CD8-positive, alpha-beta T cell (primary cell): ENCODE measurements at regions of chr9 and their contacts with region 1.

Region 1: DNA sequence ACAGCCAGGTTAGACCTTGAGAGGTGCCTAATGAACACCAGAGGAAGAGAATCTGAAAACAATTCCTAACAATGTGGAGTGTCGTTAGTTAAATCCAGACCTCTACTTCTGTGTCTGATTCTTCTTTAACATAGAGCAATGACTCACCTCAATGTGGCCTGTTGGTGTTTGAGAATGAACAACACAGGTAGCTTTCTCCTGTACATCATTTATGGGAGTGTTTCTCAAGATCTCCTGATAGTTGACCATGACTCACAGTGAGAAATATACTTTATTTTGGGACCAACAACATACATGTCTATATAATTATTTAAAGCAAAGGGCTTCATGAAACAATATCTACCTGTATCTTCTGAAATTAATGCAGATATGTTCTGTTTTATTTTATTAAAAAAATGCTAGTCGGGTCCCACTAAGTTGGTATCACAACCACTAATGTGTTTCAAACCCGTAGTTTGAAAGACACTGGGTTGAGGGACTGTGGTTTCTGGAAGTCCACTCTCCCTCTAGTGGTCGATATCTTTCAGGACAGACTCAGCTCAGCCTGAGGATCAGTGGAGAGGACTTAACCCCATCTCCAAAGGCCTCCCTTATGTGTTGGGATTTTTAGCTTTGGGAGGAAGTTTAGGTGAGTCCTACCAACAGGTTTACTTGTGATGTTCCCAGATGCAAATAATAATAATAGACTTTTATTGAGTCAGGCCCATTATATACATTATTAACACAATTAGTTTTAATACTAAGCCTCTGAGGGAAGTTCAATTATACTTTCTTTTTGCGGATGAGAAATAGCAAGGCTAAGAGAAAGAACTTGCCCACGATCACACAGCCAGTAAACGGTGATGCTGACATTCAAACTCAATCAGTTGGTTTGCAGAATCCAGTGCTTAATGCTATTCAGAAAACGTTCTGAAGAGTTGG is 70.0 kb upstream of the KLF9 start:
- DNase-seq: peak in 2 of 9 experiments; percentile 58 to 67
- ATAC-seq: peak; percentile 67
- H3K4me3 ChIP-seq: no peak overlapping the region
- H3K4me3 Mint-ChIP-seq: no peak overlapping the region
- H3K27ac ChIP-seq: no peak overlapping the region
- H3K27ac Mint-ChIP-seq: no peak overlapping the region
- H3K4me1 ChIP-seq: no peaks in the 10 kb centered on the region
- H3K4me1 Mint-ChIP-seq: peaks cover 12% of the 10 kb centered on the region
- H3K27me3 ChIP-seq: no peaks in the 10 kb centered on the region
- H3K27me3 Mint-ChIP-seq: no peaks in the 10 kb centered on the region
- CTCF ChIP-seq: peak; percentile 52

Region 2: DNA sequence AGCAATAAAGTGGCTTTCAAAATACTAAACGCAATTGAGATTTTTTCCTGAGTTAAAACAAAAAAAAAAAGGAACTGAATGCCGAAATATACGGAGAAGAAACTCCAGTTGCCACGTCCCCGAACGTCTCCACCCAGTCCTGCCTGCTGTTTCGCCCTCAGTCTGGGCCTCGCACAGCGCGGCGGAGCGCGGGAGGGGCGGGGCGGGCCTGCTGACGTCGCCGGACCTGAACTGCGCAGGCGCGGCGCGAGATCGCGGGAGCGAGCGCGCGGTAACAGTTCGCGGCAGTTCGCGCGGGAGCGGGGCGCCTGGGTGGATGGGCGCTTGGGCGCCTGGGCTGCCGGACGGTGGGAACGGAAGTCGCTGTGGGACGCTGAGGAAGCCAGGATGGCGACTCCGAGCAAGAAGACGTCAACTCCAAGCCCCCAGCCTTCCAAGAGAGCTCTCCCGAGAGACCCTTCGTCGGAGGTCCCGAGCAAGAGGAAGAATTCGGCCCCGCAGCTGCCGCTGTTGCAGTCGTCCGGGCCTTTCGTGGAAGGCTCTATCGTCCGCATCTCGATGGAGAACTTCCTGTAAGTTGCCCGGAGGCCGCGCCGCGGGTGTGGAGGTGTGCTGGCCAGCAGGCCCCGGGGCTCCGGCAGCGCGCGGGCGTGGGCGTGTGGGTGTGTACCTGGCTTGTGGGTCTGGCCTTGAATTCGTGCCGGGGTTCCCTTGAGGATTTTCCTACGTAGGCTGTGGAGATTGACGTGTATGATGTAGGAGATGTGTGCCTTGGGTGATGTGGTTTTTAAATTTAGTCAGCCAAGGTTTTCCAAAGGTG is 225.6 kb before region 1 on chr9 and contains the start of gene SMC5:
- CTCF ChIA-PET with region 1: no interaction called
- POLR2A ChIA-PET with region 1: no interaction called
- intact Hi-C with region 1: loop called in 1 of 2 experiments (anchors 10 kb)
- DNase-seq: peak; percentile 76 to 95 (median 87)
- ATAC-seq: peak; percentile 87
- H3K4me3 ChIP-seq: peak within 1 kb of the TSS; percentile 89 to 97
- H3K4me3 Mint-ChIP-seq: peak within 1 kb of the TSS; percentile 95
- H3K27ac ChIP-seq: peak within 1 kb of the TSS; percentile 85 to 94
- H3K27ac Mint-ChIP-seq: peak within 1 kb of the TSS; percentile 96
- H3K4me1 ChIP-seq: peaks cover 54% of the 10 kb centered on the region
- H3K4me1 Mint-ChIP-seq: peaks cover 66% of the 10 kb centered on the region
- H3K27me3 ChIP-seq: no peaks in the 10 kb centered on the region
- H3K27me3 Mint-ChIP-seq: no peaks in the 10 kb centered on the region
- CTCF ChIP-seq: no peak
- total RNA-seq, gene SMC5: 28.6 to 32.0 TPM

Region 3: GRCh38 chr9:70352802-70353201 is 131.7 kb before region 1 on chr9:
- CTCF ChIA-PET with region 1: interaction called, 8 read pairs
- POLR2A ChIA-PET with region 1: interaction called, 3 read pairs
- intact Hi-C with region 1: loop called (anchors 1 kb)
- DNase-seq: peak in 2 of 9 experiments; percentile 34 to 53
- ATAC-seq: peak; percentile 36
- H3K4me3 ChIP-seq: no peak overlapping the region
- H3K4me3 Mint-ChIP-seq: no peak overlapping the region
- H3K27ac ChIP-seq: no peak overlapping the region
- H3K27ac Mint-ChIP-seq: no peak overlapping the region
- H3K4me1 ChIP-seq: no peaks in the 10 kb centered on the region
- H3K4me1 Mint-ChIP-seq: peaks cover 2% of the 10 kb centered on the region
- H3K27me3 ChIP-seq: no peaks in the 10 kb centered on the region
- H3K27me3 Mint-ChIP-seq: no peaks in the 10 kb centered on the region
- CTCF ChIP-seq: peak; percentile 75

Region 4: DNA sequence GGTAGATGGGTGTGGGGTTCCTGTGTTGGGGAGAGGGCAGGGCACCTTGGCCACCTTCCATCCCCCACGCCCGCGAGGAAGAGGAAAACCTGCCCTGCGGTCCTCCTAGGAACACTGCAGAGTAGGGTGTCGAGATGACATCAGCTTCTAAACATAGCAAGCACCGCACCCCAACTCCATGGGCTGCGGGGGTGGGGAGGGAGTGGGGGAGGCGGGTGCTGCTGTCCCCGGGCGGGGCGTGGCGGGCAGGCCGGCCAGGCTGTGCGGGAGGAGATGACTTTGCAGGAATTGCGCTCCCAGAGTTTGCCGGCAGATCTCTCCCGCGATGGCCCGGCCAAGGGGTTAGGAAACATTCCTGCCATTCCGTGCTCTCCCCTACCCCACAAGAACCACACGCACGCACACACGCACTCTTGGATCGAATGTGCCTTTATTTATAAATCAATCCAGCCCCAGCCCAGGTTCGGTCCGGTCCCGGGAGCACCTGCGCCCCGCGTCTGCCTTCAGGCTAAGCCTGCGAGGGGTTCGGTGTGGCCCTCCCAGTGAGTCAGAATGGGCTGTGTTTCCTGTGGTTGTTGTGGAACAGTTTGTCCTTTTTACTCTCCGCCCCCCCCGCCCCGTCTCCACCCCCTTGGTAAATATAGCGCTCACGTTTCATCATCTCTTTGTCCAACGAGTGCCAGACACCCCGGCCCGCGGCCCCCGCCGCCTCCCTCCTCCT is 64.8 kb before region 1 on chr9:
- CTCF ChIA-PET with region 1: interaction called, 9 read pairs
- POLR2A ChIA-PET with region 1: interaction called, 4 read pairs
- intact Hi-C with region 1: loop called (anchors 1 to 10 kb)
- DNase-seq: peak; percentile 77 to 94 (median 86)
- ATAC-seq: peak; percentile 56
- H3K4me3 ChIP-seq: peak overlapping the region; percentile 73 to 79
- H3K4me3 Mint-ChIP-seq: peak overlapping the region; percentile 95
- H3K27ac ChIP-seq: peak overlapping the region; percentile 95 to 97
- H3K27ac Mint-ChIP-seq: peak overlapping the region; percentile 100
- H3K4me1 ChIP-seq: peaks cover 42% of the 10 kb centered on the region
- H3K4me1 Mint-ChIP-seq: peaks cover 51% of the 10 kb centered on the region
- H3K27me3 ChIP-seq: no peaks in the 10 kb centered on the region
- H3K27me3 Mint-ChIP-seq: no peaks in the 10 kb centered on the region
- CTCF ChIP-seq: no peak

Region 5: GRCh38 chr9:70463877-70464276 is 20.6 kb before region 1 on chr9:
- CTCF ChIA-PET with region 1: interaction called, 4 read pairs
- POLR2A ChIA-PET with region 1: no interaction called
- intact Hi-C with region 1: loop called in 1 of 2 experiments (anchors 1 kb)
- DNase-seq: no peak
- ATAC-seq: no peak
- H3K4me3 ChIP-seq: no peak overlapping the region
- H3K4me3 Mint-ChIP-seq: no peak overlapping the region
- H3K27ac ChIP-seq: no peak overlapping the region
- H3K27ac Mint-ChIP-seq: no peak overlapping the region
- H3K4me1 ChIP-seq: no peaks in the 10 kb centered on the region
- H3K4me1 Mint-ChIP-seq: peaks cover 5% of the 10 kb centered on the region
- H3K27me3 ChIP-seq: no peaks in the 10 kb centered on the region
- H3K27me3 Mint-ChIP-seq: no peaks in the 10 kb centered on the region
- CTCF ChIP-seq: no peak

Region 6: GRCh38 chr9:70519912-70520724 is 35.6 kb after region 1 on chr9:
- CTCF ChIA-PET with region 1: no interaction called
- POLR2A ChIA-PET with region 1: no interaction called
- intact Hi-C with region 1: no loop called
- DNase-seq: no peak
- ATAC-seq: no peak
- H3K4me3 ChIP-seq: no peak overlapping the region
- H3K4me3 Mint-ChIP-seq: no peak overlapping the region
- H3K27ac ChIP-seq: no peak overlapping the region
- H3K27ac Mint-ChIP-seq: no peak overlapping the region
- H3K4me1 ChIP-seq: no peaks in the 10 kb centered on the region
- H3K4me1 Mint-ChIP-seq: peaks cover 4% of the 10 kb centered on the region
- H3K27me3 ChIP-seq: no peaks in the 10 kb centered on the region
- H3K27me3 Mint-ChIP-seq: no peaks in the 10 kb centered on the region
- CTCF ChIP-seq: no peak

Region 7: DNA sequence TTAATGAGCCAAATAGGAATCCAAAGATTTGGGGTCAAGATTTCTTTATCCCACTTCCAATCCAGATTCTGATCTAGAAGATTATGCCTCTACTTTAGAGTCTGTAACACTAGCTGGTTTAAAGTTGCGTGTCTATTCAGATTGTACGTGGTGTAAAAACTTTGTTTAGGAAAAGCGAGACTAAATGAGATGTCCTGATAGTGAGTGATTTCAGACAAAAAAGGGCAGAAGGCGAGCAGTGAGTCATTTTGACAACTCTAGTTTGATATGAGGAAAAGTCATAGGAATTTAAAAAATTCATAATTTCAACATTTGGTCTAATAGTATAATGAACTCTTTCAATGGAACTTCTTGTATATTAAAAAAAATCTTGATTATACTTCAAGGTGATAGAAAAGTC is 49.6 kb after region 1 on chr9:
- CTCF ChIA-PET with region 1: interaction called, 3 read pairs
- POLR2A ChIA-PET with region 1: no interaction called
- intact Hi-C with region 1: loop called in 1 of 2 experiments (anchors 10 kb)
- DNase-seq: no peak
- ATAC-seq: no peak
- H3K4me3 ChIP-seq: no peak overlapping the region
- H3K4me3 Mint-ChIP-seq: no peak overlapping the region
- H3K27ac ChIP-seq: no peak overlapping the region
- H3K27ac Mint-ChIP-seq: no peak overlapping the region
- H3K4me1 ChIP-seq: peaks cover 10% of the 10 kb centered on the region
- H3K4me1 Mint-ChIP-seq: peaks cover 20% of the 10 kb centered on the region
- H3K27me3 ChIP-seq: no peaks in the 10 kb centered on the region
- H3K27me3 Mint-ChIP-seq: no peaks in the 10 kb centered on the region
- CTCF ChIP-seq: no peak